Colonic mucosa (tissue), 4 donors: ENCODE measurements at regions of chr17 and their contacts with region 1.

Region 1: DNA sequence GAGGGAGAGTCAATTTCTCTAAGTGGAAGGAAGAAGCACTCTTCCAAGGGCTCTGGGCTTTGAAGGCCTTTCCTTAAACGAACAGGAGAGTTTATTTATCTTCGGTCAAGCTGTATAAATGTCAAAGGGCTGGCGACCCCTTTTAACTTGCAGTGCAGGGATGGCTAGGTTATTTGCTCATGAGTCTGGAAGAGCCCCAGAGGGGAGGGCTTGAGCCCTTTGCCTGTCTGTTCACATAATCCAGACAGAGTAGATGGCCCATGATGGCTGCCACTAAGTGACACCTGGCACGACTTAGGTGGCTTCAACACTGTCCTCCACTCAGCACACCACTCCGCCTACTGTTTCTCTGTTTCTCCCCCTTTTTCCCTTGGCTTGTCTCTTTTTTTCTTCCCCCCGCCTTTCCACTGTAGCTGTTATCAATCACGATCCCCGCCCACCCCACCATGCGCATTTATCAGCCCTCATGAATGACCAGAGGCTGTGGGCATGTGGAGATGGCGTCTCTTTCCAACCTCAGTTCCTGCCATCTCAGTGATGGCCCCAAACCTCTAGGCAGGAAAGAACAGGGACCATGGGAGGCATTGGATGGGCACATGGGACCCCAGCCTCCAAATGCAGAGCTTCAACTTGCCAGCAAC is 408.7 kb upstream of the TNRC6C start:
- DNase-seq: no peak
- H3K4me3 ChIP-seq: no peak overlapping the region
- H3K27ac ChIP-seq: no peak overlapping the region
- H3K4me1 ChIP-seq: no peaks in the 10 kb centered on the region
- H3K27me3 ChIP-seq: no peaks in the 10 kb centered on the region
- CTCF ChIP-seq: no peak

Region 2: DNA sequence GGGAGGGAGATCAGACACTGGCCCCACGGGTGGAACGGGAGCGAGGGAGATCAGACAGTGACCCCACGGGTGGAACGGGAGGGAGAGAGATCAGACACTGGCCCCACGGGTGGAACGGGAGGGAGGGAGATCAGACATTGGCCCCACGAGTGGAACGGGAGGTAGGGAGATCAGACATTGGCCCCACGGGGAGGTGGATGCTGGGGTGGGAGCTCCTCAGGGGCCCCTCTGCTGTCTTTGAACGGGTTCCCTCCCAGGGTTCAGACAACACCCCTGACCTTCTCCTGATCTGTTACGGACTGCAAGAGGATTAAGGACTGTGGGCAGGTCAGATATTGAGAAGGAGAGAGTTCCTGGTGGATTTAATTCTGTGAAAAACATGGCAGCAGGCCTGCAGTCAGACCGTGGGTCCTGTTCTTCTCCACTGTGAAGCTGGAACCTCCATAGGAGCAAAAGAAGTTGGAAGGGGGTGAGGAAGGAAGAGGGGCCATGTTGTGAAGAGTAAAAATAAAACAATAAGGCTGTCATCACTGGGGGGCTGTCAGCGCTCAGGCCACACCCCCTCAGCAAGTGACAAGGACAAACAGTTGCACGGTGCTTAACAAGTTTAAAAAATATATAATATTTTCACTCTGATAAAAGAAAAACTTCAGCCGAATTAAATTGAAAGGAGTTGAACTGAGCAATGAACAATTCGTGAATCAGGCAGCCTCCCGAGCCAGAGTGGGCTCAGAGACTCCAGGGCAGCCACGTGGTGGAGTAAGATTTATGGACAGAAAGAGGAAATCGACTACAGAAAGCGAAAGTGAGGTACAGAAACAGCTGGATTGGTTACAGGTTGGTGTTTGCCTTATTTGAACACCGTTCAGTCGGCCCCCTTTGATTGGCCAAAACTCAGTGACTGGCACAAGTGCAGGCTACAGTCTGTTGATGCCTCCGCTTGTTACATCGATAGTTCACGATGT is 60.0 kb after region 1 on chr17:
- intact Hi-C with region 1: loop called (anchors 2 kb)
- DNase-seq: peak; percentile 41
- H3K4me3 ChIP-seq: no peak overlapping the region
- H3K27ac ChIP-seq: peak overlapping the region; percentile 40
- H3K4me1 ChIP-seq: no peaks in the 10 kb centered on the region
- H3K27me3 ChIP-seq: no peaks in the 10 kb centered on the region
- CTCF ChIP-seq: no peak